CD8-positive, alpha-beta T cell (primary cell): ENCODE measurements at regions of chr3 and their contacts with region 1.

Region 1: GRCh38 chr3:48507351-48508061 is 3.5 kb upstream of the SHISA5 start:
- DNase-seq: peak; percentile 53 to 88 (median 80)
- ATAC-seq: peak; percentile 87
- H3K4me3 ChIP-seq: no peak overlapping the region
- H3K4me3 Mint-ChIP-seq: peak overlapping the region; percentile 47
- H3K27ac ChIP-seq: peak overlapping the region in 1 of 2 experiments; percentile 25
- H3K27ac Mint-ChIP-seq: peak overlapping the region; percentile 72
- H3K4me1 ChIP-seq: peaks cover 36% of the 10 kb centered on the region
- H3K4me1 Mint-ChIP-seq: peaks cover 37% of the 10 kb centered on the region
- H3K27me3 ChIP-seq: no peaks in the 10 kb centered on the region
- H3K27me3 Mint-ChIP-seq: no peaks in the 10 kb centered on the region
- CTCF ChIP-seq: peak; percentile 72

Region 2: DNA sequence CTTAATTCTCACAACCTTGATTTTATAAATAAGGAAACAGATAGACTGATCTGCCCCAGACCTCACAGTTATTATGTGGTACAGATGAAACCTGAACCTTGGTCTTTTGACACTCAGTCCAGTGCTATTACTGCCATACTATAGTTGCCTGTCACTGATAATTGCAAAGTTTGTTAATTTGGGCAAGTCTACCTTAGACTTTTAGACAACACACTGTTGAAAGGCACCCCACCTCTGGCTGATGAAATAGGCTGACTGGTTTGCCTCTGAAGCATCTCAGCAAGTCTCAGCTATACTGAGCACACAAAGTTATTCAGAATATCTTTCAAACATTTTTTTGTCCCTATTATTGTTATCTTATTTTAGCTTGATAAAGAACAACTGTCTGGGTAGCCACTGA is 438.2 kb before region 1 on chr3:
- CTCF ChIA-PET with region 1: no interaction called
- POLR2A ChIA-PET with region 1: no interaction called
- intact Hi-C with region 1: no loop called
- DNase-seq: no peak
- ATAC-seq: no peak
- H3K4me3 ChIP-seq: no peak overlapping the region
- H3K4me3 Mint-ChIP-seq: no peak overlapping the region
- H3K27ac ChIP-seq: no peak overlapping the region
- H3K27ac Mint-ChIP-seq: no peak overlapping the region
- H3K4me1 ChIP-seq: no peaks in the 10 kb centered on the region
- H3K4me1 Mint-ChIP-seq: peaks cover 11% of the 10 kb centered on the region
- H3K27me3 ChIP-seq: no peaks in the 10 kb centered on the region
- H3K27me3 Mint-ChIP-seq: no peaks in the 10 kb centered on the region
- CTCF ChIP-seq: no peak

Region 3: GRCh38 chr3:48273594-48274211 is 233.8 kb before region 1 on chr3:
- CTCF ChIA-PET with region 1: interaction called, 4 read pairs
- POLR2A ChIA-PET with region 1: no interaction called
- intact Hi-C with region 1: loop called (anchors 1 kb)
- DNase-seq: peak in 8 of 9 experiments; percentile 5 to 78 (median 58)
- ATAC-seq: peak; percentile 50
- H3K4me3 ChIP-seq: no peak overlapping the region
- H3K4me3 Mint-ChIP-seq: no peak overlapping the region
- H3K27ac ChIP-seq: no peak overlapping the region
- H3K27ac Mint-ChIP-seq: no peak overlapping the region
- H3K4me1 ChIP-seq: peaks cover 7% of the 10 kb centered on the region
- H3K4me1 Mint-ChIP-seq: peaks cover 20% of the 10 kb centered on the region
- H3K27me3 ChIP-seq: no peaks in the 10 kb centered on the region
- H3K27me3 Mint-ChIP-seq: no peaks in the 10 kb centered on the region
- CTCF ChIP-seq: peak; percentile 75

Region 4: GRCh38 chr3:48465531-48466378 is 41.8 kb before region 1 on chr3:
- CTCF ChIA-PET with region 1: interaction called, 56 read pairs
- POLR2A ChIA-PET with region 1: interaction called, 29 read pairs
- intact Hi-C with region 1: loop called (anchors 1 kb)
- DNase-seq: peak; percentile 51 to 87 (median 81)
- ATAC-seq: peak; percentile 93
- H3K4me3 ChIP-seq: peak overlapping the region; percentile 77 to 95
- H3K4me3 Mint-ChIP-seq: peak overlapping the region; percentile 87
- H3K27ac ChIP-seq: peak overlapping the region; percentile 90 to 98
- H3K27ac Mint-ChIP-seq: peak overlapping the region; percentile 97
- H3K4me1 ChIP-seq: peaks cover 53% of the 10 kb centered on the region
- H3K4me1 Mint-ChIP-seq: peaks cover 55% of the 10 kb centered on the region
- H3K27me3 ChIP-seq: no peaks in the 10 kb centered on the region
- H3K27me3 Mint-ChIP-seq: no peaks in the 10 kb centered on the region
- CTCF ChIP-seq: no peak

Region 5: GRCh38 chr3:48472915-48473616 is 34.4 kb before region 1 on chr3:
- CTCF ChIA-PET with region 1: interaction called, 56 read pairs
- POLR2A ChIA-PET with region 1: interaction called, 29 read pairs
- intact Hi-C with region 1: loop called (anchors 1 kb)
- DNase-seq: peak; percentile 85 to 99 (median 92)
- ATAC-seq: peak; percentile 87
- H3K4me3 ChIP-seq: peak overlapping the region; percentile 62 to 65
- H3K4me3 Mint-ChIP-seq: peak overlapping the region; percentile 90
- H3K27ac ChIP-seq: peak overlapping the region; percentile 82 to 92
- H3K27ac Mint-ChIP-seq: peak overlapping the region; percentile 99
- H3K4me1 ChIP-seq: peaks cover 55% of the 10 kb centered on the region
- H3K4me1 Mint-ChIP-seq: peaks cover 56% of the 10 kb centered on the region
- H3K27me3 ChIP-seq: no peaks in the 10 kb centered on the region
- H3K27me3 Mint-ChIP-seq: no peaks in the 10 kb centered on the region
- CTCF ChIP-seq: no peak

Region 6: DNA sequence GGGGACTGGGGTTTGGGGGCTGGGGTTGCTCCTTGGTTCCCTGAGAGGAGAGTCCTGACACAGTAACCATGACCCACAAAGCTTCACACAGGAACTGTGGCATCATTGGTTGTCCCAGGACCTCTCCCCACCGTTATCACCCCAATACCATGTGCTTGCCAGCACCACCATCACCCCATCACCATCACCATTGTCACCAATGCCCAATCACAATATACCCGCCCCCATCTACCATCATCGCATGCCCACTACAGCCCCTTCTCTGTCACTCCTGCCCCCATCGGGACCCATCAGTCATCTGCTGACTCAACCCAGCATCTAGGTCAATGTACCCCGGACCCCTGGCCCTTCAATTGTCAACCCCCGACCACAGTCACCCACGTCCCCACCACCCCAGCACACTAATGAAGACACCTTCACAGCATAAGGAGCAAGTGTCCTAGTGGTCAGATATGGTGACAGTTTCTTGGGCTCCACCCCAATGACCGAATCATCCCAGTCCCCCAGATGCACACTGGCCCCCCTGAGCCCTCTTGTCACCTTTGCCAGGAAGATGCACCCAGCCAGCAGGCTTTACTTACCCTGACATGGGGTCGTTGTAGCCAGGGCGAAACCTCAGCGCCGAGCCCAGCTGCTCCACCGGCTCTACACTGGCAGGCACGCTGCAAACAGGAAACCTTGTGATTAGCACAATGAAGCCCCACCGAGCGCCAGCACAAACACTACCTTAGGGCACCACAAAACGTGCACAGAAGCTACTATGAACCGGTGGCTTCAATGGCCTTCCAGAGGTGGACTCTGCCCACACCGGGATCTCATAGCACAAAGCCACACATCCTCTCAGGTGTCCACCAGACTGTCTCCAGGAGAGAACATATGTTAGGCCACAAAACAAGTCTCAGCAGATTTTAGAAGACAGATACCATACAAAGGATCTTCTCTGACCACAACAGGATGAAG is 28.6 kb before region 1 on chr3:
- CTCF ChIA-PET with region 1: interaction called, 56 read pairs
- POLR2A ChIA-PET with region 1: interaction called, 29 read pairs
- intact Hi-C with region 1: loop called in 1 of 2 experiments (anchors 1 kb)
- DNase-seq: peak in 8 of 9 experiments; percentile 56 to 87 (median 74)
- ATAC-seq: peak; percentile 80
- H3K4me3 ChIP-seq: peak overlapping the region; percentile 52 to 55
- H3K4me3 Mint-ChIP-seq: peak overlapping the region; percentile 81
- H3K27ac ChIP-seq: peak overlapping the region; percentile 58 to 84
- H3K27ac Mint-ChIP-seq: peak overlapping the region; percentile 99
- H3K4me1 ChIP-seq: peaks cover 26% of the 10 kb centered on the region
- H3K4me1 Mint-ChIP-seq: peaks cover 37% of the 10 kb centered on the region
- H3K27me3 ChIP-seq: no peaks in the 10 kb centered on the region
- H3K27me3 Mint-ChIP-seq: no peaks in the 10 kb centered on the region
- CTCF ChIP-seq: no peak